ENCODE measurements at regions of chr6 and their contacts with region 1.

Region 1: DNA sequence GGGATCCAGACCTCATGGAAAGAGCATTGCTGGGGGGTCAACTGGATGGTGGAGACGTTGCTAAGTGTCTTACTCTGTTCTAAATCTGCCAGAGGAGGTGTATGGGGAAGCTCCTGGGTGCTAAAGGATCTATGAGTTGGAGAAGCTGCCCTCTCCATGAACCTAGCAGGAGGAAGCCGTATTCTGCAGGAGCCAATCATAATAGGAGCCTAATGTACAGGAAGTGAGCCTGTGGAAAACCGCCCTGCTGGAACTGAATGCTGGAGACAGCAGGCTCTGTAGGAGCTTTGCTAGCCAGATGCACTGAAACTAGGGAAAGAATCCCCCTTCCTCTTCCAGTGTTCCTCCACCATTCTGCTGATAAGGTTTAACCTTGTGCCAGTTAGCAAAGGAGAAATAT is 10.9 kb downstream of the CASP8AP2 start:
- DNase-seq: no peak
- ATAC-seq: no peak
- H3K4me3 Mint-ChIP-seq: no peak overlapping the region
- H3K27ac Mint-ChIP-seq: peak overlapping the region; percentile 35
- H3K4me1 Mint-ChIP-seq: peaks cover 44% of the 10 kb centered on the region
- H3K27me3 Mint-ChIP-seq: no peaks in the 10 kb centered on the region
- CTCF ChIP-seq: no peak

Region 2: GRCh38 chr6:89562118-89562973 is 278.2 kb before region 1 on chr6:
- CTCF ChIA-PET with region 1: no interaction called
- POLR2A ChIA-PET with region 1: no interaction called
- intact Hi-C with region 1: no loop called
- DNase-seq: no peak
- ATAC-seq: no peak
- H3K4me3 Mint-ChIP-seq: no peak overlapping the region
- H3K27ac Mint-ChIP-seq: no peak overlapping the region
- H3K4me1 Mint-ChIP-seq: no peaks in the 10 kb centered on the region
- H3K27me3 Mint-ChIP-seq: peaks cover 3% of the 10 kb centered on the region
- CTCF ChIP-seq: no peak

Region 3: DNA sequence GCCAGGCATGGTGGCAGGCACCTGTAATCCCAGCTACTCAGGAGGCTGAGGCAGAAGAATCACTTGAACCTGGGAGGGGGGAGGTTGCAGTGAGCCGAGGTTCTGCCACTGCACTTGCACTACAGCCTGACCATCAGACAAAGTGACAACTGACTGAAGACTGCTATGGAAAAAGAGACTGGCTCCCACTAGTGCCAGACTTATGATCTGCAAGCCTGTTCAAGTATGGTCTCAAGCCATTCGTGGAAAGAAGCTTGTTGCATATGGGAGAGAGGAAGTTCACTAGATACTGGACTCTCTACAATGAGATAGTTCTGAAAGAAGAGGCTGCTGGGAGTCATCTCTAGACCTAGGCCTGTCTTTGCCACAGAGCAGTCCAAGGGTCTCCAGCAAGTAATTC is 47.7 kb before region 1 on chr6:
- CTCF ChIA-PET with region 1: no interaction called
- POLR2A ChIA-PET with region 1: interaction called, 11 read pairs
- intact Hi-C with region 1: no loop called
- DNase-seq: no peak
- ATAC-seq: peak; percentile 42
- H3K4me3 Mint-ChIP-seq: no peak overlapping the region
- H3K27ac Mint-ChIP-seq: no peak overlapping the region
- H3K4me1 Mint-ChIP-seq: peaks cover 21% of the 10 kb centered on the region
- H3K27me3 Mint-ChIP-seq: no peaks in the 10 kb centered on the region
- CTCF ChIP-seq: no peak

Region 4: DNA sequence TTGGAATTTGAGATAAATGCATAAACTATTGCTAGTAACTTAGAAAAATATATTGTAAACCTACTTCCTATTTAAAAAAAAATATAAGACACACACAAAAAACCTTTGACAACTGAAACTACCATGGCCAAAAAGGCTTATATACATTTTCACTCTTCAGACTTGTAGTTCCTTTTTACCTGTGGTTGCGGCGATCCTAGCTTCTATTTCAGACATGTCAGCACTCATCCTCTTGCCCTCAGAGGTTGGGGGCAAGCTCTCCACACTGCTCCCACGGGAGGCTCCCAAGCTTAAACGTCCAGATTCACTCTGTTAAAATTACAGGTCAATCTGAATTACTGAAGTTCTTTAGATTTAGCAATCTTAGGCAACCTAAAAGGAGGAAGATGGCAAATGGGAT is 706.5 kb after region 1 on chr6:
- CTCF ChIA-PET with region 1: no interaction called
- POLR2A ChIA-PET with region 1: interaction called, 10 read pairs
- intact Hi-C with region 1: no loop called
- DNase-seq: no peak
- ATAC-seq: no peak
- H3K4me3 Mint-ChIP-seq: no peak overlapping the region
- H3K27ac Mint-ChIP-seq: no peak overlapping the region
- H3K4me1 Mint-ChIP-seq: peaks cover 22% of the 10 kb centered on the region
- H3K27me3 Mint-ChIP-seq: no peaks in the 10 kb centered on the region
- CTCF ChIP-seq: no peak

Measured in activated B cell treated with CpG ODN at 0.5 μM for 24 hours (primary cell).